Esophagus muscularis mucosa (tissue), 4 donors: ENCODE measurements at regions of chr1 and their contacts with region 1.

Region 1: GRCh38 chr1:179882243-179883039 is at the start of gene TOR1AIP1:
- DNase-seq: peak; percentile 98
- H3K4me3 ChIP-seq: peak within 1 kb of the TSS; percentile 81 to 92 (median 83)
- H3K27ac ChIP-seq: peak within 1 kb of the TSS; percentile 95 to 98 (median 98)
- H3K4me1 ChIP-seq: peaks cover 41 to 58% (median 58%) of the 10 kb centered on the region in 4 donors
- H3K27me3 ChIP-seq: no peaks in the 10 kb centered on the region
- CTCF ChIP-seq: peak; percentile 8 to 61 (median 36)
- EP300 ChIP-seq: no peak
- POLR2A ChIP-seq: peak; percentile 60
- total RNA-seq, gene TOR1AIP1: 114 to 145 (median 126) TPM

Region 2: DNA sequence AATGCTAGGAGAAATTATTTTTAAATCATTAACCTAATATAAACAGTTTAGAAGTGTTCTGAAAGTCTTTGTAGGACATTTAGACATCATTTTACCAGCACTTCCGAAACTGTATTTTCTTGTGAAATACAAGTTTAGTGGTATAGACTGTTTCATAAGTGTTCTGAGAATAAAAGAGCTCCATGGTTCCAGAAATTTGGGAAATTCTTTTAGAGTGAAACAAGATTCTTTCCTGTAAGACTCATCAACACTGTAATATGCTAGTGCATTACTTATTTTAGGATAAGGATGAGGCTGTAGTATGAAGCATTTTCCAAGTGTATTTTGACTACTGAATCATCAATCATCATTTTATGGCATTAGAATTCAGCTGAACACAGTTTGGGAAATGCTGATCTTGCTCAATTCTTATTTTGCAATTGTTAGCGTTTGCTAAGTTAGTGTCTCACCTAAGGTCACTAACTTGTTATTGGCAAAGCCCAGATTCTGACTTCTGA is 145.6 kb after region 1 on chr1:
- intact Hi-C with region 1: loop called (anchors 5 kb)
- DNase-seq: no peak
- H3K4me3 ChIP-seq: no peak overlapping the region
- H3K27ac ChIP-seq: peak overlapping the region; percentile 62 to 79 (median 71)
- H3K4me1 ChIP-seq: peaks cover 0 to 43% (median 33%) of the 10 kb centered on the region in 4 donors
- H3K27me3 ChIP-seq: no peaks in the 10 kb centered on the region
- CTCF ChIP-seq: no peak
- EP300 ChIP-seq: no peak
- POLR2A ChIP-seq: no peak